Spleen (tissue), 13 donors: ENCODE measurements at regions of chr15 and their contacts with region 1.

Region 1: GRCh38 chr15:22253676-22254408 is 173.5 kb downstream of the OR4M2 start:
- DNase-seq: no peak
- H3K4me3 ChIP-seq: peak overlapping the region in 1 of 8 donors; percentile 7
- H3K27ac ChIP-seq: peak overlapping the region in 4 of 8 donors; percentile 5 to 38 (median 14)
- H3K4me1 ChIP-seq: peaks cover 10 to 26% (median 12%) of the 10 kb centered on the region in 6 donors
- H3K27me3 ChIP-seq: peaks cover 0 to 22% (median 0%) of the 10 kb centered on the region in 7 donors
- CTCF ChIP-seq: no peak
- POLR2A ChIP-seq: no peak

Region 2: DNA sequence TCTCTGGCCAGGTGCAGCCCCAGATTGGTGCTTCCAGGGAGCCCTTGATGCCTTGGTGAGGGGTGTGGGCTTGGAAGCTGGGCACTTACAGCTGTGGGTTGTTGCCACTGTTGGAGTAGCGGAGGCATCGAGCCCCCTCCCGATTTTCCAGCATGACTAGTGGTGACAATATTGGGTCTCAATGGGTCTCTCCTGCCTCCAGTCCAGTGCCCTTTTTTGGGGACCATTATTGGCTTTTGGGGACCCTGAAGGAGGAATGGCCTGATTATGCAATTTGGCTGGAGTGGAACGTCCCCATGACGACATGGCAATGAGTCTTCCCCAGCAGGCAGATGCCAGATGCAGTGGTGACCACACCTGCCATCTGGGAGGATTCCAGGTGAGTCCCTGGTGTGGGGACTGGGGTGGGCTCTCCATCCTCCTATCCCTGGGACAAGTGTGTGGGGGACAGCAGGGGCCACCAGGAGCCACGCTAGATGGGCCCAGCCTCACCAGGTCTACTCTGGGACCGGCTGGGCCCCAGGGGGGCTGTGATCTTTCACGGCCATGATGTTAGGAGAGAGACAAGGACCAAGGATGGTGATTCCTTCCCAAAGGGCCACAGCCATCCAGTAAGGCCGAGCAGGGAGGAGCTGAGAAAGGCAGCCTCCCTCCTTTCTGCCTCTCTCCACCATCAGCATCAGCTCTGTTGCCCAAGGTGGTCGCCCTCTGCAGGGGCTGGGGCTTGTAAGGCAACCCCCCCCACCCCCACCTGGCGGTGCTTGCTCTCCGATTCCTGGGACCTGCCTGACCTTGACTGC is 1909.0 kb before region 1 on chr15:
- intact Hi-C with region 1: loop called (anchors 5 kb)
- DNase-seq: peak; percentile 83
- H3K4me3 ChIP-seq: no peak overlapping the region
- H3K27ac ChIP-seq: no peak overlapping the region
- H3K4me1 ChIP-seq: peaks cover 0 to 5% (median 0%) of the 10 kb centered on the region in 6 donors
- H3K27me3 ChIP-seq: peaks cover 0 to 10% (median 0%) of the 10 kb centered on the region in 7 donors
- CTCF ChIP-seq: no peak
- POLR2A ChIP-seq: no peak

Region 3: DNA sequence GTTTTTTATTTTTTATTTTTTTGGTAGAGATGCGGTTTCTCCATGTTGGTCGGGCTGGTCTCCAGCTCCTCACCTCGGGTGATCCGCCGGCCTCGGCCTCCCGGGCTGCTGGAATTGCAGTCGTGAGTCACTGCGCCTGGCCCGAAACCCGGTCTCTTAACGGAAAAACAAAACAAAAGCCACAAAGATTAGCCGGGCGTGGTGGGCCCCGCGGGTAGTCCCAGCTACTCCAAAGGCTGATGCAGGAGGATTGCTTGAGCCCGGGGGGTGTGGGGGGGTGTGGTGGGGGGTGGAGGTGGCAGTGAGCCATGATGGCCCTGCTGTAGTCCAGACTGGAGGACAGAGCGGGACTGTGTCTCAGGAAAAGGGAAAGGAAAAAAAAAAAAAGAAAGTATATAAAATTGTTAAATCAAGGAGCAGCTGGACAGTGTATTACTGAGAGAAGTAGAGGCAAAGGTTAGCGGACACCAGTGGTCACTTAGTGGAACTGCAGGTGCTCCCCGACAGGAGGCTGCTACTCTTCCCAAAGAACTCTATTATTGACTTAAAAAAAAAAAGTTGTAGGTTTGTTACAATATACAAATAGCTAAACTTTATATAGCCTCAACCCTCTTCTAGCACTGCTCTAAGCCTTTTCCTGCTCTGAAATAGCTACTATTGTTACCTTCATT is 815.8 kb after region 1 on chr15:
- intact Hi-C with region 1: no loop called
- DNase-seq: no peak
- H3K4me3 ChIP-seq: no peak overlapping the region
- H3K27ac ChIP-seq: no peak overlapping the region
- H3K4me1 ChIP-seq: no peaks in the 10 kb centered on the region
- H3K27me3 ChIP-seq: peaks cover 0 to 36% (median 0%) of the 10 kb centered on the region in 7 donors
- CTCF ChIP-seq: no peak
- POLR2A ChIP-seq: no peak